ENCODE measurements at regions of chr5 and their contacts with region 1.

Region 1: DNA sequence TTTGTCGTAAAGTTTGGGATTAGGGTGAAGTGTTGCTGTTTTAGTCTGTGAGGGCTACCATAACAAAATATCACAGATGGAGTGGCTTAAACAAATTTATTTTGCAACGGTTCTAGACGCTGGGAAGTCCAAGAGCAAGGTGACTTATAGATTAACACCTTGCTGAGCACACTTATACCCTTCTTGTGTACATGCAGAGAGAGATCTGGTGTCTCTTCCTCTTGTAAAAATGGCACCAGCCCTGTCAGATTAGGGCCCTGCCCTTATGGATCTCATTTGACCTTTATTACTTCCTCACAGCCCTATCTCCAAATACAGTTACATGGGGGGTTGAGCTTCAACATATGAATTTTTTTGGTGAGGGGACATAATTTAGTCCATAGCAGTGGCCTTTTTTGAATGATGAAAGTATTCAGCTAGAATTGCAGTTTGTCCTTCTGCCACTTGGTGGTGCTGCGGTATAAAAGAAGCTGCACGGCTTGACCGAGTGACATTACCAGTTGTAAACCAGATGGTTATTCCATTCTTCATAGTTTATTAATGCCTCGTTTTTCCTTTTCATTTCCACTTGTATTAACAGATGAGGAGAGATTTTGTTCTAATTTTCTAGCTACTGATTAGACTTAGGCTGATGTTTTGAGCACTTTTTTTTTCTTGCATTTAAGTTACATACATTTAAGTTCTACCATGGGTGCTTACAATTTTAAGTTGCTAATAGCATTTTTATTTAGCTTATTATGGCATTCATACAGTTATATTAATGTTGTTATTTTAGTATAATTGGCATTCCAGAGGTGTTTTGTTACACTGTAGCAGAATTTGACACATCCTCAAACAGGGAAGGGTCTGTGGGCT is 19.4 kb downstream of the DCP2 start:
- DNase-seq: peak; percentile 50
- H3K4me3 ChIP-seq: no peak overlapping the region
- H3K27ac ChIP-seq: no peak overlapping the region
- H3K27me3 ChIP-seq: no peaks in the 10 kb centered on the region
- CTCF ChIP-seq: peak; percentile 89

Region 2: GRCh38 chr5:112811023-112811422 is 185.0 kb before region 1 on chr5:
- CTCF ChIA-PET with region 1: no interaction called
- POLR2A ChIA-PET with region 1: no interaction called
- DNase-seq: no peak
- H3K4me3 ChIP-seq: no peak overlapping the region
- H3K27ac ChIP-seq: no peak overlapping the region
- H3K27me3 ChIP-seq: no peaks in the 10 kb centered on the region
- CTCF ChIP-seq: no peak

Region 3: GRCh38 chr5:112976432-112977309 is 19.3 kb before region 1 on chr5 and contains the start of gene DCP2:
- CTCF ChIA-PET with region 1: interaction called, 19 read pairs
- POLR2A ChIA-PET with region 1: interaction called, 3 read pairs
- DNase-seq: peak; percentile 97
- H3K4me3 ChIP-seq: peak within 1 kb of the TSS; percentile 95
- H3K27ac ChIP-seq: peak within 1 kb of the TSS; percentile 94
- H3K27me3 ChIP-seq: no peaks in the 10 kb centered on the region
- CTCF ChIP-seq: no peak
- polyA plus RNA-seq, gene DCP2: 12.9 and 18.4 TPM in 2 replicates

Region 4: GRCh38 chr5:113147101-113147508 is 151.1 kb after region 1 on chr5:
- CTCF ChIA-PET with region 1: interaction called, 12 read pairs
- POLR2A ChIA-PET with region 1: no interaction called
- DNase-seq: peak; percentile 85
- H3K4me3 ChIP-seq: no peak overlapping the region
- H3K27ac ChIP-seq: peak overlapping the region; percentile 92
- H3K27me3 ChIP-seq: peaks cover 1% of the 10 kb centered on the region
- CTCF ChIP-seq: no peak

Region 5: DNA sequence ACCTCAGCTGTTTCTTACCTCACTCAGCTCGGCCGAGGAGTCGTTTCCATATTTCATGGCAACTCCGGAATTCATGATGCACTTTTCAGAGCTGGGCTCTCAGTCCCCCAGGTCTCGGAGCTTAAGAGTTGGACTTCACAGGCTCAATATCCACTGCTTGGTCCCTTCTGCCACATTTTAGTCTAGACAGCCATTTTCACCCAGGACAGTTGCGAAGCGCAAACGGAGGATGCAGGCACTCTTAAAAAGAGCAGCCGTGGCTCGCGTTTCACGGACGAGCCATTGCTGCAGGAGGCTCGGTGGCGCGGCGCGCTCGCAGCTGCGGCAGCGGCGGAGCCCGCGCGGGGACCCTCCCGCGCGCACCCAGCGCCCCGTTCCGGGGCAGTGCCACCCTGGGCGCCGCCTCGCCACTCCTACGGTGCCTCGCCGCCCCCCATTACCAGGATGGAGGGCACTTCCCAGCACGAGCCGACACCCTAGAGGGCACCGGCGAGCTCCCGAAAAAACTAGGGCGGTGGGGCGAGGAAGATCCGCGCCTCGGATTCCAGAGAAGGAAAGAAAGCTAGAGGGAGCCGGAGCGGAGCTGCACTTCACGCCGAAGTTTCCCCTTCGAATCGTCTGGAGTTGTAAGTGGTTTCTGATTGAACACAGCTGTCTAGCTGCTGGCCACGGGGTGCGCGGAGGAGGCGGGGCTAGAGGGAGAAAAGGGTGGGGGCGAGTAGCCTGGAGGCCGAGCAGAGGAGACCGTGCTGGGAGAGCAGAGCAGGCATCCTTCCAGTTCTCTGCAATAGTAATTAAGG is 298.5 kb after region 1 on chr5:
- CTCF ChIA-PET with region 1: interaction called, 19 read pairs
- POLR2A ChIA-PET with region 1: no interaction called
- DNase-seq: peak; percentile 85
- H3K4me3 ChIP-seq: peak overlapping the region; percentile 89
- H3K27ac ChIP-seq: peak overlapping the region; percentile 90
- H3K27me3 ChIP-seq: peaks cover 6% of the 10 kb centered on the region
- CTCF ChIP-seq: peak; percentile 35

Region 6: GRCh38 chr5:113336975-113337374 is 341.0 kb after region 1 on chr5:
- CTCF ChIA-PET with region 1: interaction called, 21 read pairs
- POLR2A ChIA-PET with region 1: no interaction called
- DNase-seq: no peak
- H3K4me3 ChIP-seq: no peak overlapping the region
- H3K27ac ChIP-seq: peak overlapping the region; percentile 3
- H3K27me3 ChIP-seq: no peaks in the 10 kb centered on the region
- CTCF ChIP-seq: peak; percentile 36

Region 7: DNA sequence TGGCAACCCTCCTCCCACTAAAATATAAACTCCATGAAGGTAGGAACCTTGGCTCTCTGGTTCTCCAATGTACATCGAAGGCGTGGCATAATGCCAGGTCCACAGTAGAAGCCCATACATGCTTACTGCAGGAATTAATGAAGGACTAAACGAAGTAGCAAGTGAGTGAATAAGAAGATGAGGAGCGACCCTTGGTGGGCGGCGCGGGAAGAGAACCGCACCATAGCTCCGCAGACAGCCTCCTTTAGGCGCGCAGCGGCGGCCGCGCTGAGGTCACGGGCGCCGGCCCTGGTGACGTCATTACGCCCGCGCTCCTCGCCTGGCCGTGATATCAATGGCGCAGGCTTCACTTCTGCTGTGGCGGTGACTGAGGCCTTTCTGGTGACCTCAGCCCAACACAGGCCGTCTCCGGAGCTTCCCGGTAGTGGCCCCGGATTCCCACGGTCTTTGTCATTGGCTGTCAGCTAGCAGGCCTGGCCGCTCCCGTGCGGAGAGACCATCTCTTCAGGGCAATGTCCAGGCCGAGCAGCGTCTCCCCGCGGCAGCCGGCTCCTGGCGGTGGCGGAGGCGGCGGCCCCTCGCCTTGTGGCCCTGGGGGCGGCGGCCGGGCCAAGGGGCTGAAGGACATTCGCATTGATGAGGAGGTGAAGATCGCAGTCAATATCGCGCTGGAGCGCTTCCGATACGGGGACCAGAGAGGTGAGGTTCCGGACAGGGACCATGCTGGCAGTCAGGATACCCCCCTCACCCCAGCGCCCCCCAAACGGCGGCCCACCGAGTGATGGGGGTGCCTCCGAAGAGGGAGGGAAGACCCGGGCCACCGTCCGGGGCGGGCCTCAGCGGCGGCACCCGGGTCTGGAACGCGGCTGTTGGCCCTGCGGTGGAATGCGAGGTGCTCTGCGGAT is 517.6 kb after region 1 on chr5 and contains the start of gene YTHDC2:
- CTCF ChIA-PET with region 1: interaction called, 74 read pairs
- POLR2A ChIA-PET with region 1: interaction called, 4 read pairs
- DNase-seq: peak; percentile 36
- H3K4me3 ChIP-seq: peak within 1 kb of the TSS; percentile 81
- H3K27ac ChIP-seq: no peak within 1 kb of the TSS
- H3K27me3 ChIP-seq: no peaks in the 10 kb centered on the region
- CTCF ChIP-seq: peak; percentile 41
- polyA plus RNA-seq, gene YTHDC2: 8.2 and 10.7 TPM in 2 replicates